ENCODE measurements at regions of chr9 and their contacts with region 1.

Region 1: DNA sequence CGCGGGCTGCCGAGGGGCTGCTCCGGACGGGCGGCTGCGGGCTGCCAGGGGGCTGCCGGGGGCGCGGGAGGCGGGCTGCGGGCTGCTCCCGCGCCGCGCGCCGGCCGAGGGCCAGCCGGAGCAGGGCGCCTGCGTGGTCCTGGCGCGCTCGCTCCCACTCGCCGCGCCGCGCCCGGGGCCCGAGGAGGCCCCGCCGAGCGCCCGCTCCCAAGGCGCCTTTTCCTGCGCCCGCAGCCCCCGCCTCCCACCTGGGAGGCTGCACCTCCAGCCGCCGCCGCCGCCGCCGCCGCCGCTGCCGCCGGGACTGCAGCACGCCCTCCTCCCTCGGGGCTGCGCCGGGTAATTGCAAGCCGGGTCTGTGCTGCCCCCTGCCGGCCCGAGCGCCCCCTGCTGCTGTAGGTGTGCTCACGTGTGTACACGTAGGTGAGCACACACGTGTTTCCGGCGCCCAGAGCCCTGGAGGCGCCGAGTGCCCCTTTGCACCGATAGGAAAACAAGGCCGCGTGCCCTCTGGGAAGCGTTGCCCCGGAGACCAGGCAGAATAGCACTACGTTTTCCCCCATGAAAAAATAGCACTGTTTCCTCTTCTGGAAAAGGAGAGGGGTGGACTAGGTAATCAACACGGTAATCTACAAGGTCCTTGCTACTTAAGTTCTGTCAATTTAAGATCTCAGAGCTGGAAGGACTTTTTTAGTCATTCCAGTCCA is at the start of gene EPB41L4B:
- DNase-seq: no peak
- H3K4me3 ChIP-seq: peak within 1 kb of the TSS; percentile 54
- H3K27ac ChIP-seq: no peak within 1 kb of the TSS
- H3K27me3 ChIP-seq: peaks cover 49% of the 10 kb centered on the region
- CTCF ChIP-seq: peak; percentile 84
- polyA plus RNA-seq, gene EPB41L4B: 1.0 and 1.5 TPM in 2 replicates

Region 2: DNA sequence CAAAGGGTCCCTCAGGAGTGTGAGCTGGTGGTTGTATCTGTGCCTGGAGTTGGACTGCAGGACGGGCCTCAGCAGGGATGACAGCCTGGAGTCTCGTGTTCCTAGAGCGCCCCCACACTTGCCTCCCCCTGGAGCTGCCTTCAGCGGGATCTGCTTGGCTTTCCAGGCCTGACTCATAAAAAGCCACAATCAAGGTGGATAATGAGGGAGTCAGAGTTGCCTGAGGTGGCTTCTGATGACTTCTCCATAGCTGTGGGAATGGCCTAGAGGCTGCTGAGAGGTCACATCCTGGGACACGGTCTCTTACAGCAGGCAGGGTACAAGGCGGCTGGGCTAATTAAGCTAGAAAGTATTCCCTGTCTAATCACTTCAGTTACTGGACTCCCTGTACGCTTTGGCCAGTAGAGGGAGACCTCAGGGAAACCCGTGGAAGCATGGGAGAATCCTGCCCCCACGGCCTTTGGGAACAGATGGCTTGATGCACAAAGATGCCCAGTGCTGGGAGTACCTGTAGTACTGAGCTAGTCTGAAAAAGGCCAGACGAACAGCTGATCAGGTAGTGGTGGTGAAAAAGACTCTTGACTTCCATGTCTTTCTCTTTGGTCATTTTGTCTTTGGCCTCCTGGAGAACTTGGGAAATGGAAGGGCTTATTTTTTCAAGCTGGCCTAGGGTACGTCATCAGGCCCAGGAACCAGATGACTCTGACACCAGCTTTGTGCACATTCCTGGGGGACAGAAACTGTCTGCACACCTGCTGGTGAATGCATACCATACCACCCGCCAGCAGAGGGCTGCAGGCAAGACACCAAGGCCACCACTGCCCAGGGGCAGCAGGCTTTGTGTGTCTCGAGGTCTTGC is 137.7 kb before region 1 on chr9:
- CTCF ChIA-PET with region 1: interaction called, 11 read pairs
- POLR2A ChIA-PET with region 1: no interaction called
- DNase-seq: no peak
- H3K4me3 ChIP-seq: no peak overlapping the region
- H3K27ac ChIP-seq: no peak overlapping the region
- H3K27me3 ChIP-seq: peaks cover 10% of the 10 kb centered on the region
- CTCF ChIP-seq: peak; percentile 59

Region 3: GRCh38 chr9:109286571-109286977 is 34.3 kb before region 1 on chr9:
- CTCF ChIA-PET with region 1: no interaction called
- POLR2A ChIA-PET with region 1: no interaction called
- DNase-seq: no peak
- H3K4me3 ChIP-seq: no peak overlapping the region
- H3K27ac ChIP-seq: no peak overlapping the region
- H3K27me3 ChIP-seq: no peaks in the 10 kb centered on the region
- CTCF ChIP-seq: no peak

Measured in AG04450 (cell line).